ENCODE measurements at regions of chrX and their contacts with region 1.

Region 1: GRCh38 chrX:63784902-63785707 is at the start of gene ARHGEF9:
- DNase-seq: no peak
- ATAC-seq: no peak
- H3K4me3 ChIP-seq: no peak within 1 kb of the TSS
- H3K27ac ChIP-seq: no peak within 1 kb of the TSS
- H3K4me1 ChIP-seq: no peaks in the 10 kb centered on the region
- H3K27me3 ChIP-seq: no peaks in the 10 kb centered on the region
- CTCF ChIP-seq: no peak
- POLR2A ChIP-seq: no peak
- RAD21 ChIP-seq: no peak
- total RNA-seq, gene ARHGEF9: 15.0 TPM

Region 2: GRCh38 chrX:63702556-63702955 is 82.5 kb before region 1 on chrX:
- CTCF ChIA-PET with region 1: no interaction called
- POLR2A ChIA-PET with region 1: no interaction called
- RAD21 ChIA-PET with region 1: no interaction called
- intact Hi-C with region 1: loop called (anchors 10 kb)
- DNase-seq: no peak
- ATAC-seq: no peak
- H3K4me3 ChIP-seq: no peak overlapping the region
- H3K27ac ChIP-seq: no peak overlapping the region
- H3K4me1 ChIP-seq: no peaks in the 10 kb centered on the region
- H3K27me3 ChIP-seq: no peaks in the 10 kb centered on the region
- CTCF ChIP-seq: no peak
- POLR2A ChIP-seq: no peak
- RAD21 ChIP-seq: no peak